Posterior vena cava (tissue), 2 donors: ENCODE measurements at regions of chr17 and their contacts with region 1.

Region 1: DNA sequence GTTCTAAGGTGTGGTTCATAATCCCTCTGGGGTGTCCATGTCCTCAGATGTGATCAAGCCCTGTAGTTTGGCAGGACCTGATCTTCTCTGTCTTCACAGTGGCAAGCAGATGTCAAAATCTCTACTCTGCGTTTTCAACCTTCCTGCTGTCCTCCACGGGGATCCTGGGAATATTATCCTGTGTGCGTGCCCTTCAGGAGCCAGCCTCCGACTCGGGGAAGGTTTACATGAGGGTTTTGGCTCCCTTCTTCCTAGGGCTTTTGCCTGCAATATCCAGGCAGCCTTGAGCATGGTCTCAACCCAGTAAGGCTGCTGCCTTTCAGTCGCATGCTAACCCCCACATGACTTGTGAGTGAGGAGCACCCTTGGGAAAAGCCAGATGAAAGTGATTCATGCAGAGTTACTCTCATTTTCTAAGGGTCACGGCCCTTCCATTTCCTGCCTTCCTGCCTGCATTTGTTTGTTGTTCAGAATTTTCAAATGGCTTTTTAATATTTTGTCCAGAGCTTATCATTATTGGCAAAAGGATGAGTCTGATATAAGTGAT is 202.2 kb upstream of the CHMP6 start:
- DNase-seq: peak; percentile 49

Region 2: GRCh38 chr17:79664921-79665737 is 1124.3 kb before region 1 on chr17:
- intact Hi-C with region 1: loop called in 1 of 2 experiments (anchors 5 kb)
- DNase-seq: peak; percentile 86

Region 3: DNA sequence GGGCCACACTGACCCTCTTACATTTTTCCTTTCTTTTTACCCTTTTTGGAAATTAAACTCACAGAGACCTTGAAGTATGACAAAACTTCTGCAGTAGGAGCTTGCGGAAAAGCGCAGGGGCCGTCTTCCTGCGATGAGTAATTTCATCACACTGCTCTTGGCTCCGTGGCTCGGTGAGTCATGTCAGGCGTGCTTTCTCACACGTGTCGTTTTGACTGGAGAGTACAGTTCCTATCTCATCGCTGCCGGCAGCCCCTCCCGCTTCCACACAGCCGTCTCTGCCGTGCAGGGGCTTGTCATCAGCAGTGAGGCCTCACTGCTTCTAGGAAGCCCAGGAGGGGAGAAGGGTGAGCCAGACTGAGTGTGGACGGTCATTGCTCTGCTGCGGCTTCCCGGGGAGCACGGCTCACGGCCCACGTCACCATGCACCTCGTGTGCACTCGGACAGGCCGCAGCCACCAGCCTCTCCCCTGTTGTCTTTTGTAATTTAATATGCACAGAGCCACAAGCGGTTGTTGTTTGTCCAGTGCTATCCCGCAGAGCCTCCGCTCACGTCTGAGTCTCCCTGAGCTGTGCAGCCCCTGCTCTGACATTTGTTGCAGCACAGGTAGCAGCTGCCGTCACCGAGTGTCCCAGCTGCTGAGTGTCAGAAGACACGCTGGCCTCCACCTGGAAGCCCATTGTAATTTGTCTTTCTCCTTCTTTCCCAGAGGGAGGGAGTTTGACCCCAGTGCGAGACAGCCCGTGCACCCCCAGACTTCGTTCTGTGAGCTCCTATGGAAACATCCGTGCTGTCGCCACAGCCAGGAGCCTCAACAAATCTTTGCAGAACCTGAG is 102.8 kb after region 1 on chr17:
- intact Hi-C with region 1: no loop called
- DNase-seq: peak; percentile 97